ENCODE measurements at regions of chr20 and their contacts with region 1.

Region 1: DNA sequence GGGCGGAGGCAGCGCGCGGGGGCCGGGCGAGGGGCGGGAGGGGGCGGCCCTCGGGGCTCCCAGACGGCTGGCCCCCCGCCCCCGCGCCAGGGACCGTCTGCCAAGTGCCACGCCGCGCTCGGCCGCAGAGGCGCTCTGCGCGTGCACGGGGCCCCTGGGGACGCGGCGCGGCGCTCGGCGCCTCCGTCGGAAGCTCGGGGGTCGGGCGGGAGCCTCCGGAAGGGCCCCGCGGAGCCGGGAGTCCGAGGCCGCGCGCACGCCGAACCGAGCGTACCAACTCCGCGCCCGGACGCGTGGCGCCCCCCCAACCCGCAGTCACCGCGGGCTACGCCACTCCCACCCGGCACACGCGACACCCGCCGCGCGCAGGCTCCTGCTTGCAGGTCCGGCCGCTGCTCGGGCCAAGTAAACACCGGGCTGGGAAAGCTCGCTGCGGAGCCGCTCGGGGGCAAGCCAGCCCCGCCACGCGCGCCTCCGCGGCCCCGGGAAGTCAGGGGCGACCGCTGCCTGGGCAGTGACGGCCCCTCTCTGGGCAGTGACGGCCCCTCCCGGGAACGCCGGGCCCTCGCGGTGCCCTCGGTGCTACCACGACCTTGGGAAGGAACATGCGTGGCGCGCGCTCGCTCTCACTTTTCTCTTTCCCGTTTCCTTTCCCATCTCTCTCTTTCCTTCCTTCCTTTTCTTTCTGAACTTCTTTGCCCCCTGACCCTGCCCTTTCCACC is 384 bp upstream of the PREX1 start:
- DNase-seq: peak; percentile 26 to 83 (median 57)
- ATAC-seq: peak; percentile 88
- H3K4me3 ChIP-seq: peak overlapping the region; percentile 38
- H3K4me3 Mint-ChIP-seq: peak overlapping the region; percentile 75 to 87 (median 81)
- H3K27ac ChIP-seq: no peak overlapping the region
- H3K27ac Mint-ChIP-seq: peak overlapping the region in 8 of 9 donors; percentile 39 to 82 (median 64)
- H3K4me1 ChIP-seq: peaks cover 23 to 25% of the 10 kb centered on the region in 2 donors
- H3K4me1 Mint-ChIP-seq: peaks cover 16 to 42% (median 35%) of the 10 kb centered on the region in 7 donors
- H3K27me3 ChIP-seq: no peaks in the 10 kb centered on the region
- H3K27me3 Mint-ChIP-seq: peaks cover 4 to 21% (median 11%) of the 10 kb centered on the region in 5 donors

Region 2: DNA sequence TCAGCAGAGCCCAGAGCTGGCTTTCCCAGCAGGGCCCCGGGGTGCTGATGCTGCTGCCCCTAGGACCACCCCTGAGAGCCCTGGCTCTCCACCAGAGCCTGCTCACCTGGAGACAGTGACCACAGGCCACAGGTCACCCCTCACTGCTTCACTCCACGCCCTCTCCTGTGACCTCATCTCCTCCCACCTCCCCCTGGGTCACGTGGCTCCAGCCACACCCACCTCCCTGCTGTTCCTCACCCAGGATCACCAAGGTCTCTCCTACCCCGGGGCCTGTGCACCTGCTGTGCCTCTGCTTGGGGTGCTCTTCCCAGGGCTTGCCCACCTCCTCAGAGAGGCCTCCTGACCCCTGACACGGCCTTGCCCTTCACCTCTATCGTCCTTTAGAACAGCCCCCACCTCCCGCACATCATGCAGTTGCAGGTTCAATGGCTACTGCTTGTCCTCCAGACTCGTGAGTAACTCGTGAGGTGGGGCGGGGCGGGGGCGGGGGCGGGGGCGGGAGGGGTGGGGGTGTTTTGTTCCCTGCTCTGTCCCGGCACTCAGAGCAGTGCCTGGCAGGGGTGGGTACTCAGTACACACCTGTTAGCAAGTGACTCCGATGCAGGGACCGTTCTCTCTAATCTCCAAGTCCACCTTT is 468.4 kb before region 1 on chr20:
- CTCF ChIA-PET with region 1: no interaction called
- POLR2A ChIA-PET with region 1: no interaction called
- intact Hi-C with region 1: no loop called
- DNase-seq: no peak
- ATAC-seq: peak; percentile 50
- H3K4me3 ChIP-seq: no peak overlapping the region
- H3K4me3 Mint-ChIP-seq: peak overlapping the region in 2 of 10 donors; percentile 9 to 29
- H3K27ac ChIP-seq: no peak overlapping the region
- H3K27ac Mint-ChIP-seq: no peak overlapping the region
- H3K4me1 ChIP-seq: no peaks in the 10 kb centered on the region
- H3K4me1 Mint-ChIP-seq: peaks cover 0 to 4% (median 0%) of the 10 kb centered on the region in 7 donors
- H3K27me3 ChIP-seq: no peaks in the 10 kb centered on the region
- H3K27me3 Mint-ChIP-seq: peaks cover 2 to 27% (median 12%) of the 10 kb centered on the region in 5 donors

Region 3: DNA sequence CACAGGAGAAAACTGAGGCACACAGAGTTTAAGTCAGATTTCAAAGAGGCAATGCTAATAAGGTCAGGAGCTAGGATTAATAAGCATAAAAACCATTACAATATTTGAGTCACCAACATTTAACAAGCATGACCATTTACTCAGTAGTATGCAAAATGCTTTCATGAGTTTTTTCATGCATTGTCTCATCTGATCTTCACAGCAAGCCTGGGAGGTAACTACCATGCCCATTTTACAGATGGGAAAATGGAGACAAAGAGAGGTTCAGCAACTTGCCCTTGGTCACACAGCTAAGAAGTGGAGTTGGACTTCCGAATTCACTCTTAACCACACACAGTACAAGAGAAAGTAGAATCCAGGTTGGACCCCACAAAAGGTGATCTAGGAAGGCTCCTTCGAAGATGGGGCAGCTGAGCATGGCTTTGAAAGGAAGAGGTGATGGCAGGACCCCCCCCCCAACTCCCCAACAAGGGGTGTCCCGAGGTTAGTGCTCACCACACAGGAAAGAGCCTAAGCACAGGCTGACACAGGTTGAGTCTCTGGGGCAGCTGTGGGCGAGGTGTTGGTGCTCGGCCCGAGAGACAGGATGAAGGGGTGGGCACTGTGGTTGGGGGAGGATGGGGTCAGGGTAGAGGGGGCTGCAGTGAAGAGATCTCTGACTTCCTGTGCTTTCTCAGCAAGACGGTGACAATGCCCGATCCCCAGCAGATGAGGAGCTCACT is 109.2 kb before region 1 on chr20:
- CTCF ChIA-PET with region 1: no interaction called
- POLR2A ChIA-PET with region 1: interaction called, 3 read pairs
- intact Hi-C with region 1: loop called (anchors 2 to 5 kb)
- DNase-seq: peak in 2 of 9 donors; percentile 3 to 31
- ATAC-seq: peak; percentile 42
- H3K4me3 ChIP-seq: peak overlapping the region; percentile 3
- H3K4me3 Mint-ChIP-seq: peak overlapping the region in 5 of 10 donors; percentile 10 to 86 (median 32)
- H3K27ac ChIP-seq: no peak overlapping the region
- H3K27ac Mint-ChIP-seq: peak overlapping the region in 5 of 9 donors; percentile 37 to 84 (median 78)
- H3K4me1 ChIP-seq: peaks cover 47 to 86% of the 10 kb centered on the region in 2 donors
- H3K4me1 Mint-ChIP-seq: peaks cover 45 to 89% (median 65%) of the 10 kb centered on the region in 7 donors
- H3K27me3 ChIP-seq: no peaks in the 10 kb centered on the region
- H3K27me3 Mint-ChIP-seq: no peaks in the 10 kb centered on the region

Region 4: DNA sequence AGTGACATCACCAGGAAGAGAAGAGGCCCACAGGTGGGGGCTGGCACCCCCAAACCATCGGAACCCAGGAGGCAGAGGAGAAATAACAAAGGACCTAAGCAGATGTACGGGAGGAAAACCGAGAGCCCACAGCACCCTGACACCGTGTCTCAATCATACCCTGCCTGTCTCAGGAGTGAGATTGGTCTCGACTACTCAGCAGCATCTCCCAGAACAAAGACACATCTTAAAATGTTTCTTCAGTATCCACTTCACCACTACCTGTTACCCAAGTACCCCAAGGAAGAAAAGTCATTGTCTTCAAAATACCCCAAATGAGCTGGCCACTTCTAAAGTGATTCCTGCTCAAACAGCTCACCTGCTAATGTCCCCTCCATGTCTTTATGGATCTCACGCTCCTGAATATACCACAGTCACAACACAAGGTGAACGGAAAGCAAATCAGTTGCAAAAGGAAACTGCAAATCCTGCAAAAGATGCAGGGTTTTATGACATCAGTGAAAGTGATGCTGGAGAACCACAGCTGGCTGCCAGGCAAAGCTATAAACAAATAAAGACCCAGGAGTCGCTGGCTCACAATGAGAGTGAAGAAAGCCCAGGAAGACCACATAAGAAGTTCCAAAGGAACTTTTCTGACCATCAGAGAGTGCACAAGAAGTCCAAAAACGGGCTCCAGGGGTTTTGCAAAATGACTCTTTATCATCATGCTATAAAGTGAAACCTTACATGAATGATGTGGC is 44.5 kb before region 1 on chr20:
- CTCF ChIA-PET with region 1: no interaction called
- POLR2A ChIA-PET with region 1: no interaction called
- intact Hi-C with region 1: loop called in 1 of 2 experiments (anchors 5 kb)
- DNase-seq: peak in 1 of 9 donors; percentile 47
- ATAC-seq: peak; percentile 55
- H3K4me3 ChIP-seq: no peak overlapping the region
- H3K4me3 Mint-ChIP-seq: no peak overlapping the region
- H3K27ac ChIP-seq: no peak overlapping the region
- H3K27ac Mint-ChIP-seq: no peak overlapping the region
- H3K4me1 ChIP-seq: peaks cover 19 to 59% of the 10 kb centered on the region in 2 donors
- H3K4me1 Mint-ChIP-seq: peaks cover 16 to 54% (median 25%) of the 10 kb centered on the region in 7 donors
- H3K27me3 ChIP-seq: no peaks in the 10 kb centered on the region
- H3K27me3 Mint-ChIP-seq: no peaks in the 10 kb centered on the region

Region 5: DNA sequence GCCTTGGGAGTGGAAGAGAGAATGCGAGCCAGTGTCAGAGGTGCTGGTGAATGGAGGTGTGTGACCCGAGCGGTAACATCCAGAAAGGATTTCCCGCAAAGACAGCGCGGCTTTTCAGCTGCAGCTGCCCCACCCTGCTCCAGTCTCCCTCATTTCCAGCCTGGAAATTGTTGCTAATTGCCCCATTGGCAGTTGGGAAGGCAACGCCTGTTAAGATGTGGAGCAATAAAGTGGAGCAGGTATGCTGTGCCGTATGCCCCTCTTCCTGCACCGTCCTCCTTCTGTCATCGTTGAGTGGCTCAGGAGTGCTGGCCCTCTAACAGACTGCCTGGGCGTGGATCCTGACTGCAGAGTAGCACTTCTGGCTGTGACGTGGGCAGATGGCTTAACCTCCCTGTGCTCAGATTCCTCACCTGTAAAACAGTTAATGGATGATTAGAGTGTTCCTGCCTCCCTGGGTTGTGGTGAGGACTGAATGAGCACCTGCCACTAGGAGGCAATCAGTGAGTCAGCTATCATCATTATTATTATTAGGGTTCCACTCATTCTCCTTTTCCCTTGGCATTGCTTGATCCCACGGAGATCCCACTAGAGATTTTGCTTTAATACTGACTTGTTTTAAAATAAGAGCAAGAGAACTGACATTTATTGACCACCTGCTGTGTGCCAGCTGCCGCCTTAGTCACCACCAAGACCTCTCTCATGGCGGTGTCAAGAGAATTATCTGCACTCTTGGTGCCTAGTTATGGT is 105.0 kb after region 1 on chr20:
- CTCF ChIA-PET with region 1: no interaction called
- POLR2A ChIA-PET with region 1: no interaction called
- intact Hi-C with region 1: no loop called
- DNase-seq: no peak
- ATAC-seq: no peak
- H3K4me3 ChIP-seq: no peak overlapping the region
- H3K4me3 Mint-ChIP-seq: no peak overlapping the region
- H3K27ac ChIP-seq: no peak overlapping the region
- H3K27ac Mint-ChIP-seq: peak overlapping the region in 3 of 9 donors; percentile 28 to 43 (median 38)
- H3K4me1 ChIP-seq: no peaks in the 10 kb centered on the region
- H3K4me1 Mint-ChIP-seq: peaks cover 15 to 35% (median 25%) of the 10 kb centered on the region in 7 donors
- H3K27me3 ChIP-seq: no peaks in the 10 kb centered on the region
- H3K27me3 Mint-ChIP-seq: no peaks in the 10 kb centered on the region

Region 6: DNA sequence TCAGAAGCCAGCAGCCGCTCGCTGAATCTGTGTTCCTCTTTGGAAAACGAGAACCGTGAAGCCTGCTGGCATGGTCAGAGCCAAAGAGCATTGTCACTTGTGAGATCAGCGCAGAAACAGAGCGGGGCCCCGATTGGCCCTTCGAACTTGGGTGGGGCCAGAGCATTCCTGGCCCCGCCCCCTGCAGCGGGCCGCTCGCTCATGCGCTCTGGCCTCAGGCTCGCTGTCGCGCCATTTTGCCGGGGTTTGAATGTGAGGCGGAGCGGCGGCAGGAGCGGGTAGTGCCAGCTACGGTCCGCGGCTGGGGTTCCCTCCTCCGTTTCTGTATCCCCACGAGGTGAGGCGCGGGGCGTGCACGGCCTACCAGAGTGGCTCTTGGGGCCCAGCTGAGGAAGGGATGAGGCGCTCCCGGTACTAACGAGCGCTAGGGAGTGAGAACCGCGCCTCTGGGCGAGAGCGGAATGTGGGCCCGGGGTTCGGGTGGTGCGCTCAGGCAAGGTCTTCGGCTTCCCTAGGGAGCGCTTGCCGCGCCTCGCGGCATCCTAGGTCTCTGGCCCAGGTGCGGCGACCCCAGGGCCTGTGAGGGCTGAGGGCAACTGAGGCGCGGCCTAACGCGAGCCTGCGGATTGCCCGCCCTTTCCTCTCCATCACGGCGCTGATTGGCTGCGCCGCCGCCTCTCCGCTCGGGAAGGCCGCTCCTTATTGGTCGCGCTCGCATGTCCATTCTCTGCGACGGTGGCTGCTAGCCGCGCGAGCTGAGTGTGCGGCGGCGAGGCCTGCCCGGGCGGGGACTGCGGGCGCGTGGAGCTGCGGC is 218.1 kb after region 1 on chr20 and contains the start of gene CSE1L:
- CTCF ChIA-PET with region 1: no interaction called
- POLR2A ChIA-PET with region 1: no interaction called
- intact Hi-C with region 1: loop called in 1 of 2 experiments (anchors 5 kb)
- DNase-seq: peak; percentile 90 to 98 (median 95)
- ATAC-seq: peak; percentile 92
- H3K4me3 ChIP-seq: peak within 1 kb of the TSS; percentile 99
- H3K4me3 Mint-ChIP-seq: peak within 1 kb of the TSS; percentile 94 to 99 (median 98)
- H3K27ac ChIP-seq: peak within 1 kb of the TSS; percentile 89
- H3K27ac Mint-ChIP-seq: peak within 1 kb of the TSS; percentile 92 to 100 (median 98)
- H3K4me1 ChIP-seq: peaks cover 11 to 14% of the 10 kb centered on the region in 2 donors
- H3K4me1 Mint-ChIP-seq: peaks cover 24 to 51% (median 42%) of the 10 kb centered on the region in 7 donors
- H3K27me3 ChIP-seq: no peaks in the 10 kb centered on the region
- H3K27me3 Mint-ChIP-seq: peaks cover 0 to 4% (median 0%) of the 10 kb centered on the region in 5 donors
- total RNA-seq, gene CSE1L: 23.3 to 73.0 (median 41.1) TPM

Measured in naive thymus-derived CD4-positive, alpha-beta T cell (primary cell).